GM10248 (cell line): ENCODE measurements at regions of chr15 and their contacts with region 1.

Region 1: DNA sequence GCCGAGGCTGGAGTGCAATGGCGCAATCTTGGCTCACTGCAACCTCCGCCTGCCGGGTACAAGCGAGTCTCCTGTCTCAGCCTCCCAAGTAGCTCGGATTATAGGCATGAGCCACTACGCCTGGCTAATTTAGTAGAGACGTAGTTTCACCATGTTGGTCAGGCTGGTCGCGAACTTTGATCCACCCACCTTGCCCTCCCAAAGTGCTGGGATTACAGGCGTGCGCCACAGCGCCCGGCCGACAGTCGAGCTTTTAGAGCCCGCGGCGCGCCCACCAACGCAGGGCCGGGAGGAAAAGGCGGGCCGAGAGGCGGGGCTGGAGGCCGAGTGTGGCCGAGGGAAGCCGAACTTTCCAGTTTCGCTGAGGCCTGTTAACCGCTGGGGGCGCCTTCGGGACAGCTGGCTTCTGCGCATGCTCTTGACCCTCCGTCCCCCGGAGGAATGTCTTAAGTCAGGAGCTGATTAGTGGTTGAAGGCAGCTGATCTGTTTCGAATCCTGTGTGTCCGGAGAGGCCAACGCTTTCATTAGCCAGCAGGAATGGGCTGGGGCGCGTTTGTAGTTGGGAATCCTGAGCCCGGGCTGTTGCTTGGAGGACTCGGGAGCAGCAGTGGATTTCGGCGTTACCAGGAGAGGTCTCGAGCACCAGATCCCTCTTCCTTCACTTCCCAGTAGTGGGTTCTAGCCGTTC is 10.0 kb downstream of the RPLP1 start:
- DNase-seq: peak; percentile 96
- CTCF ChIP-seq: peak; percentile 79

Region 2: GRCh38 chr15:68900027-68900426 is 562.6 kb before region 1 on chr15:
- CTCF ChIA-PET with region 1: no interaction called
- POLR2A ChIA-PET with region 1: no interaction called
- DNase-seq: no peak
- CTCF ChIP-seq: no peak

Region 3: DNA sequence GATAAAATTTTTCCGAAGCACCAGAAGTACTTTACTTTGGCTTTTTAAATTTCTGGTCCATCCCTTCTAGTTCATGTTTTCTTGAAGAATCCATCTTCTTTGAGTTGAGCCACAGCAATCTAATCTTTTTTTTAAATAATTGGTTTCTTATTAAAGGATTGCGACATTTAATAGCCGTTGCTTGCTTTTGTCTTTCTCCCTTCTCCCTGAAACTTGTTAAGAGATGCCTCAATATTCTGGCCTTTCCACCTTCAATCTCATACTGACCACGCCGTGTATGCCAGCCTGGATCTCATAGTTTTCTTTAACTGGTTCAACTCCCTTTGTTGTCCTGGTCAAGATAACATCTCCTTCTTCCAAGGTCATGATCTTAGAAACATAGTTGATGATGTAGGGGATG is 28.4 kb before region 1 on chr15:
- CTCF ChIA-PET with region 1: interaction called, 20 read pairs
- POLR2A ChIA-PET with region 1: interaction called, 3 read pairs
- DNase-seq: no peak
- CTCF ChIP-seq: no peak

Region 4: GRCh38 chr15:69443032-69443611 is 19.5 kb before region 1 on chr15:
- CTCF ChIA-PET with region 1: interaction called, 10 read pairs
- POLR2A ChIA-PET with region 1: interaction called, 6 read pairs
- DNase-seq: peak; percentile 40
- CTCF ChIP-seq: no peak

Region 5: GRCh38 chr15:69475769-69476358 is 13.2 kb after region 1 on chr15:
- CTCF ChIA-PET with region 1: interaction called, 24 read pairs
- POLR2A ChIA-PET with region 1: no interaction called
- DNase-seq: peak; percentile 70
- CTCF ChIP-seq: peak; percentile 95

Region 6: GRCh38 chr15:69629631-69630161 is 167.1 kb after region 1 on chr15:
- CTCF ChIA-PET with region 1: no interaction called
- POLR2A ChIA-PET with region 1: no interaction called
- DNase-seq: no peak
- CTCF ChIP-seq: no peak

Region 7: DNA sequence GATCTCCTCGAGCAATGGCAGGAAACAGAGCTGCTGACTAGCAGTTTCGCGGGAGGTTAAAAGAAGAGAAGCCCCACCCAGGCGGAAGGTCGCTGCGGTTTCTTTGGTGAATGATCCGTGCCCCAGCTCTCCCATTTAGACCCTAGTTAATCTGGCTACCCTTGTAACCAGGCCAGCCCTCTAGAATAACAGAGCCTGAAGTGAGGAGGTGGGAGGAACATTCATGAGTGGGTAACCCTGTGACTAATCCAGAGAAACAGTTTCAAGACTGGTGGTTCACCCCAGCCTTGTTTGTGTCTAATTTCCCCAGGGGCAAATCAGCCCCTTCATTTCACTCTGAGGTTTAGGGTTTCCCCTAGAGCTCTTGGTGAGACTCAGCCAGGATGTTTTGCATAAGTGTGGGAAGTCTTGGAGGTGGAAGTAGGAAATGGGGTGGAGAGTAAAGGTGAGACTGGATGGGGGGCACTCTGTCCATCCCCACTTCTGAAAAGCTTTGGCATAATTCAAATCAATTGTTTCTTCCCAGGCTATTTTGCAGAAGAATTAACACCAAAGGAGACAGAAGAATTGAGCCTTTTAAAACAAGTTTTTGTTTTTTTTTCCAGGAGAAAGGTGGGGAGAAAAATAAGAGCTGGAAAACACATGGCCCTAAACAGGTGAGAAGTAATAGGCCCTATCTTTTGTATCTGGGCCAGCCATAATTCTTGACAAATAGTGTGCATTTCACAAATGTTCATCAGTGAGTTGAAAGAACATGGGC is 293.1 kb after region 1 on chr15:
- CTCF ChIA-PET with region 1: no interaction called
- POLR2A ChIA-PET with region 1: no interaction called
- DNase-seq: peak; percentile 79
- CTCF ChIP-seq: no peak